ENCODE measurements at regions of chr5 and their contacts with region 1.

Region 1: DNA sequence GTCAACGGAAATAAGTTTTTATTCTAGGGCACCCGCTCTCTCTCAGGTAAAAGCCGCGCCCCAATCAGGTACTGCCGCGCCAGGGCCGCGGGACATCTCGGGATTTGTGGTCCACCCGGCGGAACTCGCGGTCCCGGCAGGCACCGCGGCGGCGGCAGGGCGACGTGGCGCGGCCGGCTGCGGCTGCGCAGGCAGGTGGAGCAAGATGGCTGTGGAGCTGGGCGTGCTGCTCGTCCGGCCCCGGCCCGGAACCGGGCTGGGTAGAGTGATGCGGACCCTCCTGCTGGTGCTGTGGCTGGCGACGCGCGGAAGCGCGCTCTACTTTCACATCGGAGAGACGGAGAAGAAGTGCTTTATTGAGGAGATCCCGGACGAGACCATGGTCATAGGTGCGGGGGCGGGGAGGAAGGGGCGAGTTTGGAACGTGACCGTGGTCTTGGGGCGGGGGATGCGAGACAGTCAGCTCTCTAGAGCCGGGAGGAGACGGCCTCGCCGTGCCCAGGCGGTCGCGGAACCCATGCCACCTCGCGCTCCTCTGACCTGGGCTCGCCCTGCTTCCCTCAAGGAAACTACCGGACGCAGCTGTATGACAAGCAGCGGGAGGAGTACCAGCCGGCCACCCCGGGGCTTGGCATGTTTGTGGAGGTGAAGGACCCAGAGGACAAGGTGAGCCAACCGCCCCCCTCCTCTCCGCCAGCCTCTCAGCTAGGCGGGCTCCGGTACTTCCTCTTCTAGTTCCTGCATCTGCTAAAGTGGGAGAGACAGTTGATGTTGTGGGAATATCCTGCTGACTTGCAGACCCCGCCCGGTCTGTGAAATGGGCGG is at the start of gene TMED9:
- DNase-seq: peak; percentile 69 to 92 (median 86)
- ATAC-seq: peak; percentile 98
- H3K4me3 ChIP-seq: peak within 1 kb of the TSS; percentile 97 to 100
- H3K4me3 Mint-ChIP-seq: peak within 1 kb of the TSS; percentile 99
- H3K27ac ChIP-seq: peak within 1 kb of the TSS; percentile 78 to 88
- H3K27ac Mint-ChIP-seq: peak within 1 kb of the TSS; percentile 93
- H3K4me1 ChIP-seq: peaks cover 19% of the 10 kb centered on the region
- H3K4me1 Mint-ChIP-seq: peaks cover 24% of the 10 kb centered on the region
- H3K27me3 ChIP-seq: peaks cover 0 to 3% of the 10 kb centered on the region in 2 experiments
- H3K27me3 Mint-ChIP-seq: peaks cover 13% of the 10 kb centered on the region
- CTCF ChIP-seq: no peak
- total RNA-seq, gene TMED9: 42.4 to 52.2 TPM

Region 2: DNA sequence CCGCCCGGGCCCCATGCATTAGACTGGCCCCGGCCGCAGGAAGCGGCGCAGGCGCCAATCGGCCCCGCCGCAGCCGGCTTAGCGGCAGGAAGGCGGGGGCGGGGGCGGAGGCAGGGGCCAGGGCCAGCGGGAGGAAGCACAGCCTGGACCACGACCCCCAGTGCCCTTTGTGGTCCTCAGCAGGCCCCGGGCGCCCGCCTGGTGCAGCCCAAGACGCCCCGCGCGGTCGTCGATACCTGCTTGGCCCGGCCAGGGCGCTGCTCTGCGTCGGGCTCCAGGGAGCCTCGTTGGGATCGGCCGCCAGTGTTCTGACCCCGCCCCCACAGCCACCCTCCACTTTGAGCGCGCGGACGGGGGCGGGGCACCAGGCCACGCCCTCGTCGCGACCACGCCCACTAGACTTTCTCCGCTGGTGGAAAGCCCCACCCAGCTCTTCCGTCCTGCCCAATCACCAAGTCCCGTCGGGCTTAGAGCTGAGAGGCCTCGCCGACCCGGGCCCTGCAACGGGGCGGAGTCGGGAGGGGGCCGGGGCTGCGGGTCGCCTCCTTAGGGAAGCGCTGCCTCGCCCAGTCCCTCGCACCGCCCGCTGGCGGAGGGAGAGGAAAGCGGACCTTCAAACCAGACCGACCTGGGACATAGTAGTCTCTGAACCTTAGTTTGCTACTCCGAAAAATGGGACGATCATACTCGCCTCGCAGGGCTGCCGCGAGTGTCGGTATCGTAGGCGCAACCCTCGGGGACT is 94.8 kb before region 1 on chr5 and contains the start of gene PDLIM7:
- CTCF ChIA-PET with region 1: no interaction called
- POLR2A ChIA-PET with region 1: no interaction called
- intact Hi-C with region 1: no loop called
- DNase-seq: peak; percentile 88 to 97 (median 93)
- ATAC-seq: peak; percentile 88
- H3K4me3 ChIP-seq: peak within 1 kb of the TSS; percentile 64 to 80
- H3K4me3 Mint-ChIP-seq: peak within 1 kb of the TSS; percentile 82
- H3K27ac ChIP-seq: peak within 1 kb of the TSS; percentile 18 to 20
- H3K27ac Mint-ChIP-seq: no peak within 1 kb of the TSS
- H3K4me1 ChIP-seq: peaks cover 27% of the 10 kb centered on the region
- H3K4me1 Mint-ChIP-seq: peaks cover 30% of the 10 kb centered on the region
- H3K27me3 ChIP-seq: no peaks in the 10 kb centered on the region
- H3K27me3 Mint-ChIP-seq: no peaks in the 10 kb centered on the region
- CTCF ChIP-seq: no peak
- total RNA-seq, gene PDLIM7: 6.6 to 7.1 TPM

Region 3: GRCh38 chr5:177516604-177517568 is 75.3 kb before region 1 on chr5 and contains the start of gene DDX41:
- CTCF ChIA-PET with region 1: no interaction called
- POLR2A ChIA-PET with region 1: no interaction called
- intact Hi-C with region 1: loop called in 1 of 2 experiments (anchors 1 kb)
- DNase-seq: peak; percentile 88 to 98 (median 95)
- ATAC-seq: peak; percentile 88
- H3K4me3 ChIP-seq: peak within 1 kb of the TSS; percentile 95
- H3K4me3 Mint-ChIP-seq: peak within 1 kb of the TSS; percentile 94
- H3K27ac ChIP-seq: peak within 1 kb of the TSS; percentile 61 to 73
- H3K27ac Mint-ChIP-seq: peak within 1 kb of the TSS; percentile 93
- H3K4me1 ChIP-seq: peaks cover 31% of the 10 kb centered on the region
- H3K4me1 Mint-ChIP-seq: peaks cover 46% of the 10 kb centered on the region
- H3K27me3 ChIP-seq: no peaks in the 10 kb centered on the region
- H3K27me3 Mint-ChIP-seq: no peaks in the 10 kb centered on the region
- CTCF ChIP-seq: no peak
- total RNA-seq, gene DDX41: 66.8 to 71.0 TPM

Region 4: DNA sequence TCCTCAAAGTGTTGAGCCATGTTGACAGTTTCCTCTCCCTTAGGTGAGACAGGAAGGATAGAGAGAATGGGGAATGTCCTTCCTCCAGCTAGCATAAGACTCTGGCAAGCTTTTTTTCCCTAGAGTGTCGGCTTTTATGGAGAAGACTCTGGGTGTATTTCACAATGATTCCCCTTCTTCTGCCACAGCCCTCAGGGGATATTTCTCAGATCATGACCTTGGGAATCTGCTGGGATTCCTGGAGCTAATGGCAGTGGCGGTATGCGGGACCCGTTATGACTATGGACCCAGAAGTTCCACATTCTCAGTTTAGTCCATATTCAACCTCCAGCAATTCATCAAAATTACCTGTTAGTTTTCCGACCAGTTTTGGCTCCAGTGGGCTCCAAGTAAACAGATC is 1114.4 kb after region 1 on chr5:
- CTCF ChIA-PET with region 1: no interaction called
- POLR2A ChIA-PET with region 1: no interaction called
- intact Hi-C with region 1: no loop called
- DNase-seq: no peak
- ATAC-seq: no peak
- H3K4me3 ChIP-seq: no peak overlapping the region
- H3K4me3 Mint-ChIP-seq: no peak overlapping the region
- H3K27ac ChIP-seq: no peak overlapping the region
- H3K27ac Mint-ChIP-seq: no peak overlapping the region
- H3K4me1 ChIP-seq: no peaks in the 10 kb centered on the region
- H3K4me1 Mint-ChIP-seq: no peaks in the 10 kb centered on the region
- H3K27me3 ChIP-seq: no peaks in the 10 kb centered on the region
- H3K27me3 Mint-ChIP-seq: no peaks in the 10 kb centered on the region
- CTCF ChIP-seq: no peak